Motor neuron (in vitro differentiated cells): ENCODE measurements at regions of chr1 and their contacts with region 1.

Region 1: DNA sequence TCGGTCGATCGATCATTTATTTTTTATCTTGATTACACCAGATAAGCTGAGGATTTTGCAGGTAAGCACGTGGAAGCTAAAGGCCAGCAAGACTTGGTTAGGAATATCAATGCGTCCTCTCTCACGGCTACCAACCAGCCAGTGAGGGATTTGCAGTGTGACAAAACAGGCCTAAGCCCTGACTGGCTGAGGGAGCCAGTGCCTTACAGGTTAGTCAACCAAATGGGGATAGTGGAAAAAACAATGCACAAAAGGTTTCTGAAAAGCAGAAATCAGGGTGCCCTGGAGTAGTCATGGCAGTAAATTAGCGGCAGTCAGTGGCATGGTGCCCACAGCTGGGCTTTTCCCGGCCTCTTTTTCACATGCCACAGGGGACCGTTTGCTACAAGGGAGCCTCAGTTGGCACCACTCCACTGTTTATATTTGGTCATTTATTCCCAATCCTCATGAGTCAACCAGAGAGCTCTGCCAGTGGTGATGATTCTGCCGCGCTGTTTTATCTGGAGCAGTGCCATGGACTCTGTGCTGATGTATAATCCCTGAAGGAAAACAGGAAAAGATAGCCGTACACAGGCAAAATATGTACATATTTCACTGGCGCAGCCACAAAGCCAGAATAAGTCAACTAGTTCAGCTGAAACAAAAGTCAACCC is 167.6 kb downstream of the RHOU start:
- ATAC-seq: peak in 6 of 8 experiments; percentile 7 to 92 (median 75)
- H3K4me3 ChIP-seq: no peak overlapping the region
- H3K27ac ChIP-seq: no peak overlapping the region
- H3K4me1 ChIP-seq: peaks cover 39 to 40% of the 10 kb centered on the region in 2 donors

Region 2: DNA sequence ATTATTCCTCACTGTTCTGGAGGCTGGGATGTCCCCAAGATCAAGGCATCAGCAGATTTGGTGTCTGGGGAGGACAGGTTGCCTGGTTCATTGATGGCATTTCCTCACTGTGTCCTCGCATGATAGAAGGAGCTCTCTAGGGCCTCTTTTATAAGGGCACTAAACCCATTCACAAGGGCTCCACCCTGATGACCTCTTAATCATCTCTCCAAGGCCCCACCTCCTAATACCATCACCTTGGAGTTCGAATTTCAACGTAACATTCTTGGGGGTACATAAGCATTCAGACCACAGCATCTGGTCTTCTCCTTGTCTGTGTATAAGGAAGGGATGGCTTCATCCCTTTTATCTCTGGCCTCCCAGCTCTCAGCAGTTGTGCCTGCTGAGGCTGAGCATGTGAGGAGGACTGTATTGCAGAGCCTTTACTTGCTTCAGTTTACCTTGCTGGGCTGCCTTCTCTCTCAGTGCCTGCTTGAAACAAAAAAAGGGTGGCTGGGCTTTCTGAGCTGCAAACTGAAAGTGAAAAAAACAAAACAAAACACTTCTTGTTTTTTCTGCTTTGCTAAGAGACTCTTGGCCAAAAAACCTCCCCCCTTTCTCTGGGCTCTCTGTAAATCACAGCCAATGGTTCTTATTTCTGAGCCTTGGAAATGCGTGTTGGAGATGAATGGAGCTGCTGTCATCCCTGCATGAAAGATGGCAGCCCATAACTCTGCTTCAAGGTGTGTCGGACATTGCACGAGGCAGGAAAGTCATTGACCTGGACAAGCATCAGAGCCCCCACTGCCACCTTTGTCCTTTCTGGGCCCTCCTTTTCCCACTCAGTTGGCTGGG is 91.8 kb before region 1 on chr1:
- in situ Hi-C with region 1: loop called in 1 of 9 experiments (anchors 25 kb)
- ATAC-seq: peak in 3 of 8 experiments; percentile 27 to 30 (median 30)
- H3K4me3 ChIP-seq: no peak overlapping the region
- H3K27ac ChIP-seq: no peak overlapping the region
- H3K4me1 ChIP-seq: peaks cover 28 to 32% of the 10 kb centered on the region in 2 donors

Region 3: DNA sequence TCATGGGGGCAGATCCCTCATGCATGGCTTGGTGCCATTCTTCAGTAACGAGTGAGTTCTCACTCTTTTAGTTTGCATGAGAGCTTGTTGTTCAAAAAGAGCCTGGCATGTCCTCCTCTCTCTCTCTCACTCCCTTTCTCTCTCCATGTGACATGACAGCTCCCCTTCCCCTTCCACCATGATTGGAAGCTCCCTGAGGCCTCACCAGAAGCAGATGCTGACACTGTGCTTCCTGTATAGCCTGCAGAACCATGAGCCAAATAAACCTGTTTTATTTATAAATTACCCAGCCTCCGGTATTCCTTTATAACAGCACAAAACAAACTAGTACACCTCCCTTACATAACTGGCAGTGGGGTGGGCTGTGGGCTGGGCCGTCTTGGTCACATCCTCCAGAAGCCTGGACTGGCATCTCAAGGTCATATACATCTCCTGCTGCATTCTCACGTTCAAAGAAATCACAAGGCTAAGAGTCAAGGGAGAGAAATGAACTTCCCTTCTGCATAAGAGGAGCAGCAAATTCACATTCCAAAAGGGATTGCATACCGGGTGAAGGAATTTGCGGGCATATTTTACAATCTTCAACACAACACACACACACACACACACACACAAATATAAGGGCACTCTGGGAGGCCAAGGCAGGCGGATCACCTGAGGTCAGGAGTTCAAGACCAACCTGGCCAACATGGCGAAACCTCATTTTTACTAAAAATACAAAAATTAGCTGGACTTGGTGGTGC is 442.2 kb after region 1 on chr1:
- in situ Hi-C with region 1: no loop called
- ATAC-seq: no peak
- H3K4me3 ChIP-seq: no peak overlapping the region
- H3K27ac ChIP-seq: no peak overlapping the region
- H3K4me1 ChIP-seq: peaks cover 7 to 9% of the 10 kb centered on the region in 2 donors